Activated T-helper 1 cell treated with anti-CD3 and anti-CD28 coated beads, Interleukin-12 subunit alpha, Interleukin-12 subunit beta, Interleukin-2, Interleukin-4 antibody, amounts not matched to agents 30 ng/mL and 10 ng/mL and 1 ng/mL, durations not matched to agents 14 hours and 24 hours and 36 hours (primary cell): ENCODE measurements at regions of chr12 and their contacts with region 1.

Region 1: DNA sequence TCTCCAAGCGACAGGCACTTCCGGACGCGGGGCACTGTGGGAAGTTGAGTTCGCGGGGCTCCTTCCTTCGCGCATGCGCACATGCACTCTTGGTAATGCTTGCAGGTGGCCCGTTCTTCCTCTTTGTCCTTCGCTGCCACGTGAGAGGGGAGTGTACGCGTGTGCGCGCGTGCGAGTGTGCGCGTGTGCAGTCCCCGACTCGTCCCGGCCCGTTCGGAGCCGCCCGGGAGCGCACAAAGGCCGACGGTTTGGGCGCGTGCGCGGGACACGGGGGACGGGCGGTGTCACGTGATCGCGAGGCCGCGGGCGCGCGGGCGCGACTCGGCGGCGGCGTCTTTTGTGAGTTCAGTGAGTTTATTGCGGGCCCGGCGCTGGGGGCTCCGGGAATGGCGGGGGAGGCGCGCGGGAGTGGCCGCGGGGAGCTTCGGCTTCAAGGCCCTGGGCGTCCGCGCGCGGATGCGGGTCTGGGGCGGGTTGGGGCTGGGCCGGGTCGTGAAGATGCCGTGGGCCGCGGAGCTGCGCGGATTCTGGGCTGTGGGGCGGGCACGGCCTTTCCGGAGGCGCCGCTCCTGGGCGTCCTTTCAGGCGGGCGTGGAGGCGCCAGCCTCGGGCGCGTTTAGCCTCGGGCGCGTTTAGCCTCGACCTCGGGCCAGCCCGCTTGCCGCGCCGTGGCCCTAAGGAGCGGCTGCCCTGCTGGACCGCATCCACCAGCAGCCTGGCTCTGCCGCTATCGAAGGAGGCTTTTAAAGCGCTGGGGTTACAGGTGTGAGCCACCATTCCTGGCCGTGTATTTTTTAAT is at the start of gene ZNF84:
- DNase-seq: peak; percentile 97
- H3K4me3 Mint-ChIP-seq: peak within 1 kb of the TSS; percentile 86
- H3K27ac Mint-ChIP-seq: peak within 1 kb of the TSS; percentile 97
- H3K4me1 Mint-ChIP-seq: no peaks in the 10 kb centered on the region
- H3K27me3 Mint-ChIP-seq: no peaks in the 10 kb centered on the region
- total RNA-seq, gene ZNF84: 18.3 and 21.2 TPM in 2 replicates

Region 2: GRCh38 chr12:132525833-132526455 is 511.5 kb before region 1 on chr12:
- intact Hi-C with region 1: no loop called
- DNase-seq: no peak
- H3K4me3 Mint-ChIP-seq: no peak overlapping the region
- H3K27ac Mint-ChIP-seq: no peak overlapping the region
- H3K4me1 Mint-ChIP-seq: no peaks in the 10 kb centered on the region
- H3K27me3 Mint-ChIP-seq: no peaks in the 10 kb centered on the region

Region 3: GRCh38 chr12:132771126-132771838 is 266.1 kb before region 1 on chr12:
- intact Hi-C with region 1: loop called (anchors 2 kb)
- DNase-seq: peak; percentile 33
- H3K4me3 Mint-ChIP-seq: no peak overlapping the region
- H3K27ac Mint-ChIP-seq: peak overlapping the region; percentile 72
- H3K4me1 Mint-ChIP-seq: peaks cover 22% of the 10 kb centered on the region
- H3K27me3 Mint-ChIP-seq: no peaks in the 10 kb centered on the region

Region 4: GRCh38 chr12:132956011-132956788 is 81.2 kb before region 1 on chr12 and contains the start of gene ZNF605:
- intact Hi-C with region 1: loop called (anchors 1 kb)
- DNase-seq: peak; percentile 85
- H3K4me3 Mint-ChIP-seq: peak within 1 kb of the TSS; percentile 98
- H3K27ac Mint-ChIP-seq: peak within 1 kb of the TSS; percentile 94
- H3K4me1 Mint-ChIP-seq: peaks cover 18% of the 10 kb centered on the region
- H3K27me3 Mint-ChIP-seq: no peaks in the 10 kb centered on the region
- total RNA-seq, gene ZNF605: 6.3 and 7.5 TPM in 2 replicates

Region 5: GRCh38 chr12:133058203-133059125 is 21.1 kb after region 1 on chr12:
- intact Hi-C with region 1: loop called (anchors 2 kb)
- DNase-seq: no peak
- H3K4me3 Mint-ChIP-seq: no peak overlapping the region
- H3K27ac Mint-ChIP-seq: no peak overlapping the region
- H3K4me1 Mint-ChIP-seq: no peaks in the 10 kb centered on the region
- H3K27me3 Mint-ChIP-seq: no peaks in the 10 kb centered on the region

Region 6: GRCh38 chr12:133130038-133130807 is 92.8 kb after region 1 on chr12 and contains the starts of genes ZNF10 and ZNF891:
- intact Hi-C with region 1: loop called (anchors 1 kb)
- DNase-seq: peak; percentile 94
- H3K4me3 Mint-ChIP-seq: peak within 1 kb of the TSS; percentile 94
- H3K27ac Mint-ChIP-seq: peak within 1 kb of the TSS; percentile 98
- H3K4me1 Mint-ChIP-seq: peaks cover 21% of the 10 kb centered on the region
- H3K27me3 Mint-ChIP-seq: no peaks in the 10 kb centered on the region
- total RNA-seq, gene ZNF10: 5.1 and 6.4 TPM in 2 replicates
- total RNA-seq, gene ZNF891: 2.3 and 2.4 TPM in 2 replicates

Region 7: DNA sequence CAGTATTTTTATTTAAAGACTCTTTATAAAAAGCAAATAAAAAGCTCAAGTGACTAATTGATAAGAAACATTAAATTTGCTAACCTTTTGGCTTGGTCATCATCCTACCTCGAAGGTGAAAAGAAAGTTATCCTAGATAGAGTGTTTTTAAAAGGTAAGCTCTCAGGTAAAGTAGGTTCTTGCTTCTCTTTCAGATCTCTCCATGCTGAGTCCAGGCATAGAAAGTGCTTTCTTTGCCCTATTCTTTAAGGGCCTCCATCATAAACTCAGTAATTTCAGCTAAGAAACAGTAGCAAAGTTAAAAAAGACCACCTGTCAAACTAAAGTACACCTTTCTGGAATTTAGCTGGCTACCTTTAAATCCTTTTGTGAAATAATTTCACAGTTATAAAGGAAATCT is 218.9 kb after region 1 on chr12:
- intact Hi-C with region 1: no loop called
- DNase-seq: no peak
- H3K4me3 Mint-ChIP-seq: no peak overlapping the region
- H3K27ac Mint-ChIP-seq: no peak overlapping the region
- H3K4me1 Mint-ChIP-seq: no peaks in the 10 kb centered on the region
- H3K27me3 Mint-ChIP-seq: no peaks in the 10 kb centered on the region